Naive thymus-derived CD4-positive, alpha-beta T cell (primary cell): ENCODE measurements at regions of chr7 and their contacts with region 1.

Region 1: GRCh38 chr7:100478966-100479665 is at the start of gene TSC22D4:
- DNase-seq: peak; percentile 82 to 96 (median 95)
- ATAC-seq: peak; percentile 83
- H3K4me3 ChIP-seq: peak within 1 kb of the TSS; percentile 97
- H3K4me3 Mint-ChIP-seq: peak within 1 kb of the TSS; percentile 92 to 100 (median 98)
- H3K27ac ChIP-seq: peak within 1 kb of the TSS; percentile 87
- H3K27ac Mint-ChIP-seq: peak within 1 kb of the TSS; percentile 80 to 98 (median 93)
- H3K4me1 ChIP-seq: peaks cover 42 to 51% of the 10 kb centered on the region in 2 donors
- H3K4me1 Mint-ChIP-seq: peaks cover 25 to 62% (median 38%) of the 10 kb centered on the region in 7 donors
- H3K27me3 ChIP-seq: no peaks in the 10 kb centered on the region
- H3K27me3 Mint-ChIP-seq: peaks cover 0 to 2% (median 0%) of the 10 kb centered on the region in 5 donors
- total RNA-seq, gene TSC22D4: 75.6 to 124 (median 115) TPM

Region 2: DNA sequence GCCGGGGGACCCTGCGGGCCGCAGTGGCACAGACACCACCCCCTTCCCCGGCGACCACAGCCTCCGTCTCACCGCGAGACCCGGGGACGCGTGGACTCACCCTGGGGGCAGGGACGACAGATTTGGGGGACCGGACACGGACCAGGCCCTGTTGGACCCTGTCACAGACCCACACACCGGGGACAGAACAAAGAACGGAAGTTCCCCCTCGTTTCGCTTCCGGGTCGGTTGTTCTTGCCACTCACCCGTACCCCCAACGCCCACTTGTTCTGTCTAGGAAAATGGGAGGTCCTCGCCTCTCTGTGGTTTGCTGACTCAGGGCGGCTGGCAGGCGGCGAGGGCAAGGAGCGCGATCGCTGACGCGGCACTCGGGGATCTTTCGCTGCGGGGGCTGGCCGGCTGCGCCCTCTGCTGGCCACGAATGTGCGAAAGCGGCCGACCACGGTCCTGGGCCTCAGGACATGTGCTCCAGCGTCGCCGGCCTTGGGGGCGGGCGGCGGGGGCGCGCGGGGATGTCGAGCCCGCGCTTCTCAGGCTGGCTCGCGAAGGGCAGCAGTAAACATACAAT is 397.5 kb before region 1 on chr7 and contains the start of gene ZNF3:
- CTCF ChIA-PET with region 1: no interaction called
- POLR2A ChIA-PET with region 1: no interaction called
- intact Hi-C with region 1: no loop called
- DNase-seq: peak; percentile 87 to 98 (median 97)
- ATAC-seq: peak; percentile 94
- H3K4me3 ChIP-seq: peak within 1 kb of the TSS; percentile 78
- H3K4me3 Mint-ChIP-seq: peak within 1 kb of the TSS; percentile 89 to 96 (median 92)
- H3K27ac ChIP-seq: peak within 1 kb of the TSS; percentile 82
- H3K27ac Mint-ChIP-seq: peak within 1 kb of the TSS; percentile 64 to 98 (median 91)
- H3K4me1 ChIP-seq: peaks cover 5 to 18% of the 10 kb centered on the region in 2 donors
- H3K4me1 Mint-ChIP-seq: peaks cover 26 to 46% (median 41%) of the 10 kb centered on the region in 7 donors
- H3K27me3 ChIP-seq: no peaks in the 10 kb centered on the region
- H3K27me3 Mint-ChIP-seq: peaks cover 0 to 19% (median 0%) of the 10 kb centered on the region in 5 donors
- total RNA-seq, gene ZNF3: 29.1 to 48.0 (median 35.0) TPM

Region 3: GRCh38 chr7:100126931-100127865 is 351.9 kb before region 1 on chr7 and contains the start of gene MBLAC1:
- CTCF ChIA-PET with region 1: no interaction called
- POLR2A ChIA-PET with region 1: interaction called, 6 read pairs
- intact Hi-C with region 1: loop called in 1 of 2 experiments (anchors 1 kb)
- DNase-seq: peak; percentile 80 to 95 (median 91)
- ATAC-seq: peak; percentile 95
- H3K4me3 ChIP-seq: peak within 1 kb of the TSS; percentile 99
- H3K4me3 Mint-ChIP-seq: peak within 1 kb of the TSS; percentile 95 to 100 (median 98)
- H3K27ac ChIP-seq: peak within 1 kb of the TSS; percentile 98
- H3K27ac Mint-ChIP-seq: peak within 1 kb of the TSS; percentile 98 to 100 (median 99)
- H3K4me1 ChIP-seq: peaks cover 20 to 25% of the 10 kb centered on the region in 2 donors
- H3K4me1 Mint-ChIP-seq: peaks cover 13 to 46% (median 26%) of the 10 kb centered on the region in 7 donors
- H3K27me3 ChIP-seq: no peaks in the 10 kb centered on the region
- H3K27me3 Mint-ChIP-seq: no peaks in the 10 kb centered on the region
- total RNA-seq, gene MBLAC1: 4.5 to 6.3 (median 5.8) TPM

Region 4: DNA sequence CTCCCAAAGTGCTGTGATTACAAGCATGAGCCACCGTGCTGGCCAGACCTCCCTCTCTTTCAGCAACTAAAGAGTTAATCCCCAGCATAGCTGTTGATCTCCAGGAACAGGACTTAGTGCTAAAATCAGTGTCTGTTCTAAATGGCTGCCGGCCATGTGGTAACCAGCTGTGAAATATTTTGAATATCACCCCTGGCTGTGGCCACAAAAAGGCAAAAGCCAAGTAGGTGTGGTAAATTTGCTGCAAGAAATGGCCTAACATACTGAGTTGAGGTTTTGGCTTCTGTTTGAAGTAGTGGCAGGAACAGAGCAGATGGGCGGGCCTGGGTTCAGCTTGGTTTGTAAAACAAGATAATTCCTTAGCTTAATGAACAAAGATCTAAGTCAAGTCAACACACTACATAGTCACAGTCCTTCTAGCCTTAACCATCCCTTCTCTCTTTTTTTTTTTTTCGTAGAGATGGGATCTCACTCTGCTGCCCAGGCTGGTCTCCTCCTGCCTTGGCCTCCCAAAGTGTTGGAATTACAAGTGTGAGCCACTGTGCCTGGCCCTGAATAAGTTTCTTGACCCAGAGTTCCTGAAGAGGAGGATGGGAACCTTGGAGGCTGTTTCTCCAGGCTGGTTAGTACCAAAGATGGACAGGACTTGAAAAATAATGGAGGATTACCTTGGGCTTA is 37.2 kb after region 1 on chr7:
- CTCF ChIA-PET with region 1: interaction called, 5 read pairs
- POLR2A ChIA-PET with region 1: interaction called, 4 read pairs
- intact Hi-C with region 1: loop called (anchors 1 to 2 kb)
- DNase-seq: peak in 7 of 9 donors; percentile 34 to 70 (median 55)
- ATAC-seq: peak; percentile 89
- H3K4me3 ChIP-seq: peak overlapping the region; percentile 41
- H3K4me3 Mint-ChIP-seq: peak overlapping the region; percentile 51 to 79 (median 74)
- H3K27ac ChIP-seq: peak overlapping the region; percentile 52
- H3K27ac Mint-ChIP-seq: peak overlapping the region; percentile 38 to 92 (median 81)
- H3K4me1 ChIP-seq: peaks cover 23 to 29% of the 10 kb centered on the region in 2 donors
- H3K4me1 Mint-ChIP-seq: peaks cover 23 to 55% (median 33%) of the 10 kb centered on the region in 7 donors
- H3K27me3 ChIP-seq: no peaks in the 10 kb centered on the region
- H3K27me3 Mint-ChIP-seq: peaks cover 0 to 3% (median 0%) of the 10 kb centered on the region in 5 donors

Region 5: GRCh38 chr7:100545360-100546128 is 66.4 kb after region 1 on chr7:
- CTCF ChIA-PET with region 1: interaction called, 8 read pairs
- POLR2A ChIA-PET with region 1: interaction called, 7 read pairs
- intact Hi-C with region 1: loop called in 1 of 2 experiments (anchors 2 kb)
- DNase-seq: peak in 2 of 9 donors; percentile 34 to 60
- ATAC-seq: peak; percentile 55
- H3K4me3 ChIP-seq: peak overlapping the region; percentile 7
- H3K4me3 Mint-ChIP-seq: peak overlapping the region; percentile 45 to 82 (median 68)
- H3K27ac ChIP-seq: peak overlapping the region; percentile 56
- H3K27ac Mint-ChIP-seq: peak overlapping the region; percentile 77 to 95 (median 88)
- H3K4me1 ChIP-seq: peaks cover 69 to 91% of the 10 kb centered on the region in 2 donors
- H3K4me1 Mint-ChIP-seq: peaks cover 74 to 100% (median 92%) of the 10 kb centered on the region in 7 donors
- H3K27me3 ChIP-seq: no peaks in the 10 kb centered on the region
- H3K27me3 Mint-ChIP-seq: no peaks in the 10 kb centered on the region

Region 6: DNA sequence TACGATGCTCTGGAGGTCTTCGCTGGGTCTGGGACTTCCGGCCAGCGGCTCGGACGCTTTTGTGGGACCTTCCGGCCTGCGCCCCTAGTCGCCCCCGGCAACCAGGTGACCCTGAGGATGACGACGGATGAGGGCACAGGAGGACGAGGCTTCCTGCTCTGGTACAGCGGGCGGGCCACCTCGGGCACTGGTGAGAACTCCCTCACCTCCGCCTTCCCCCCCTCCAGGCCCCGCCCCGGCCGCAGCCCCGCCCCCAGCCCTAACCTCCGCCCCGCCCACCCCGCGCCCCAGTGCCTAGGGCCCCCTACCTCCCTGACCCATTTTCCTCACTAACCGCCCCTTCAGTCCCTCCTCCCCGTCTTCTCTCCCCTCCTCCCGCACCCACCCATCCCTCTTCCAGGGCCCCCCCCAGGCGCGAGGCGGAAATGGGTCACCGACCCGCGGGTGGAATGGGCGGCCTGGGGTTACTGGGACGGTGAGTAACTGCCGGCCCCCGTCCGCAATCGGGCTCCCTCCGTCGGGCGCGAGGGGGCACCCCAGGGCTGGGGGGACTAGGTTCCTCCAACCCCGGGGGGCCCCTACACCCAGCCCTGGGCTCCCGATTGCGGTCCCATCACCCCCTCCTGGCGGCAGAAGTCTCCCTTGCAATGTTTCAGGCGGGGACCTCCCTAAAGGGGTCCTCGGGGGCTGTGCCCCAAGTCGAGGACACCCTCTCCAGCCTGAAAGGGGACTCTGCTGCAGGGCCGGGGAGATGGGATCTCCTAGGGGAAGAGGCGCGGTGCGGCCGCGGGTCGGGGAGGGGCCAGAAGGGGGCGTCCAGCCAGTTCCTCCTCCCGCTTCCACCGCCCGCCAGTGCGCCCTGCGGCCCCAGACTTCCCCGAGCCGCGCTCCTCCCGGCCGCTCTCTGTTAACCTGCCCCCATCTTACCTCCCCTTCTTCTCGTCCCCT is 125.2 kb after region 1 on chr7:
- CTCF ChIA-PET with region 1: no interaction called
- POLR2A ChIA-PET with region 1: interaction called, 5 read pairs
- intact Hi-C with region 1: loop called (anchors 1 to 2 kb)
- DNase-seq: peak in 8 of 9 donors; percentile 47 to 81 (median 59)
- ATAC-seq: peak; percentile 81
- H3K4me3 ChIP-seq: peak overlapping the region; percentile 70
- H3K4me3 Mint-ChIP-seq: peak overlapping the region; percentile 79 to 94 (median 87)
- H3K27ac ChIP-seq: peak overlapping the region; percentile 67
- H3K27ac Mint-ChIP-seq: peak overlapping the region; percentile 21 to 92 (median 84)
- H3K4me1 ChIP-seq: peaks cover 6 to 10% of the 10 kb centered on the region in 2 donors
- H3K4me1 Mint-ChIP-seq: peaks cover 7 to 35% (median 16%) of the 10 kb centered on the region in 7 donors
- H3K27me3 ChIP-seq: no peaks in the 10 kb centered on the region
- H3K27me3 Mint-ChIP-seq: peaks cover 0 to 15% (median 0%) of the 10 kb centered on the region in 5 donors

Region 7: DNA sequence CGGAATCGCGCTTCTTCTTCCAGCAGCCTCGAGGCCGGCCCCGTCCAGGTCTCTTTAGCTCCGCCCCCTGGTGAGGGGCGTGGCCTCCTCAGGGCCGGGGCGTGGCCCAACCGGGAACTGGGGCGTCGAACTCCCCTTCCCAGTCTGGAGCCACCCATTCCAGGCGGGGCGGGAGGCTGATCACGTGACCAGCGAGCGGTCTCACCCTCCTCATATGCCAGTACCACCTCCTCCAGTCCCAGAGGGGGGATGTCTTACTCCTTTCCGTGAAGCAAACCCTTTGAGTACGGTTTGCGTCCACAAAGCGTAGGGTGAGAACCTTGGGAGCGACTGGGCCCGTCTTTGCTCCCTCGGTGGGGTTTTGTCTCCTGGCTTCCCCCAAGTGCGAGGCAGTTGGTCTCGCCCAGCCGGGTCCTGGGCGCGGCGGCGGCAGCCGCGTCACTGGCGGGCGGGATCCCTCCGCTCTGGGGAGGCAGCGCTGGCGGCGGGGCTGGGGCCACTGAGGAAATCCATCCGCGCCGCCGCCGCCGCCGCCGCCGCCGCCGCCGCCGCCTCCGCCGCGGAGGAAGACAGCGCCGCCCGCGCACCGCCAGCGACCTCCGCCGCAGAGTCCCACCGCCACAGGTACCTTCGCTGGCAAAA is 194.3 kb after region 1 on chr7 and contains the start of gene GNB2:
- CTCF ChIA-PET with region 1: no interaction called
- POLR2A ChIA-PET with region 1: no interaction called
- intact Hi-C with region 1: loop called (anchors 1 to 2 kb)
- DNase-seq: peak; percentile 92 to 100 (median 96)
- ATAC-seq: peak; percentile 75
- H3K4me3 ChIP-seq: peak within 1 kb of the TSS; percentile 82
- H3K4me3 Mint-ChIP-seq: peak within 1 kb of the TSS; percentile 89 to 99 (median 96)
- H3K27ac ChIP-seq: peak within 1 kb of the TSS; percentile 98
- H3K27ac Mint-ChIP-seq: peak within 1 kb of the TSS; percentile 88 to 97 (median 95)
- H3K4me1 ChIP-seq: no peaks in the 10 kb centered on the region
- H3K4me1 Mint-ChIP-seq: peaks cover 9 to 25% (median 15%) of the 10 kb centered on the region in 7 donors
- H3K27me3 ChIP-seq: no peaks in the 10 kb centered on the region
- H3K27me3 Mint-ChIP-seq: peaks cover 0 to 17% (median 0%) of the 10 kb centered on the region in 5 donors
- total RNA-seq, gene GNB2: 98.2 to 215 (median 132) TPM

Region 8: DNA sequence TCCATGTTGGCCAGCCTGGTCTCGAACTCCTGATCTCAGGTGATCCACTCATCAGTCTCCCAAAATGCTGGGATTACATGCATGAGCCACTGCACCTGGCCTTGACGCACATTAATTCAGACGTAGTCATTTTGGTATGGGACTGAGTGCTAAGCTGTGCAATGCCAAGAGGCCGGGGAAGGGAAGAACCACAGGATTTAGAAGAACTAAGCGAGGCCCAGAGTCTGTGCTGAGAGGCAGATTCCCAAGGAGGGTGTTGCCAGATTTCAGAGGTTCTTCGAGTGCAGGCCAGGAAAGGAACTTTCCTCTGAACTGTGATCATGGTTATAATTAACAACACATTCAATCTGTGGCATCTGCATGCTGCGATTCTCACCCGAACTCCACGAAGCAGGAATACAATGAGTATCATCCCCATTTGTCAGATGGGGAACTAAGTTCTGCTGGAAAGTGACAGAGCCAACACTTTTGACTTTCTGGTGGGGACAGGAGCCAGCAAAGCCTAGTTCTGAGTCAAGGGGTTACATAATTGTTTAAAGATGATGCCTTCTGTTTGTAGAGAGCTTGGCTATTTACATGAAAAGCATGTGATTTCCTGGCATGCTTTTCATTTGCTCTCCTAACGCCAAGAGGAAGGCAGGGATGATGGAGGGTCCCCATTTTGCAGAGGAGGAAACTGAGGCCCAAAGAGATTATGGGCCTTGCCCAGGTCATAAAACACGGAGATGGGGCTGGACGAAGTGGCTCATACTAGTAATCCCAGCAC is 248.1 kb after region 1 on chr7:
- CTCF ChIA-PET with region 1: interaction called, 3 read pairs
- POLR2A ChIA-PET with region 1: no interaction called
- intact Hi-C with region 1: loop called in 1 of 2 experiments (anchors 1 kb)
- DNase-seq: no peak
- ATAC-seq: no peak
- H3K4me3 ChIP-seq: no peak overlapping the region
- H3K4me3 Mint-ChIP-seq: no peak overlapping the region
- H3K27ac ChIP-seq: no peak overlapping the region
- H3K27ac Mint-ChIP-seq: peak overlapping the region in 1 of 9 donors; percentile 22
- H3K4me1 ChIP-seq: no peaks in the 10 kb centered on the region
- H3K4me1 Mint-ChIP-seq: peaks cover 0 to 5% (median 0%) of the 10 kb centered on the region in 7 donors
- H3K27me3 ChIP-seq: peaks cover 0 to 4% of the 10 kb centered on the region in 2 donors
- H3K27me3 Mint-ChIP-seq: peaks cover 16 to 31% (median 21%) of the 10 kb centered on the region in 5 donors